ENCODE measurements at regions of chr2 and their contacts with region 1.

Region 1: DNA sequence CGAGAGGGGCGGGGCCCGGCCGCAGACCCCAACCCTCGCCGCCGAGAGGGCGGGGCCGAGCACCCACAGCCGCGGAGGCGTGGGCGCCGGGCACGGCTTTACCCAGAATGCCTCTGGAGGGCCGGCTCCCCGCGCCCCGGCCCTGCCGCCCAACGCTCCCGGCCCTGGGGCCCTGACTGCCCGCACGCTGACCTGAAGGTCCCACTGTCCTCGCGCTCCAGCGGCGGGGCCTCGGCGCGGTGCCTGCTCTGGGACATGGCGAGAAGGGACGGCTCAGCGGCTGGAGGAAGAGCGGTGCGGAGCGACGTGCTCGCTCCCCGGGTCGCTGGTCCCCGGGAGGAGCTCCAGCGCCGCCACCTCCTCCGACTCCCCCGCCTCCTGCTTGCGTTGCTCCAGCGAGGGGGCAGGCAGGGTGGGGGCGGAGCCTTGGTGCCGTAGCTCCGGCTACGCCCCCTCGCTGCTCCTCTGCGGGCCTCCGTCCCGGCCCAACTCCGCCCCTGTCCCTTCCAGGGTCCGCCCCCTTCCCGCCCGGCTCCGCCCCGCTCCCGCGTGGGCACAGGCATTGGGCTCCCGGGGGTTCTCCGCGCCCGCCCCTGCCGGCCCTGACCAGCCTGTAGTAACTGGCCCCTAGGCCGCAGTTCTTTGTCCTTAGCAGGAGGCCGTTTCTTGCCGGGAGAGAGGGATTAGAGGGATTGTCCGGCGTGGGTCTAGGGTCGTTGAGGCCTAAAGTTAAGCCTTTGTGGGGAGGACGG is at the starts of genes PJVK and PRKRA:
- DNase-seq: peak; percentile 97
- ATAC-seq: peak; percentile 91
- H3K4me3 Mint-ChIP-seq: peak within 1 kb of the TSS; percentile 87
- H3K27ac Mint-ChIP-seq: peak within 1 kb of the TSS; percentile 86
- H3K4me1 Mint-ChIP-seq: peaks cover 28% of the 10 kb centered on the region
- H3K27me3 Mint-ChIP-seq: no peaks in the 10 kb centered on the region
- CTCF ChIP-seq: no peak
- total RNA-seq, gene PJVK: 2.0 and 3.1 TPM in 2 replicates
- total RNA-seq, gene PRKRA: 49.6 and 61.3 TPM in 2 replicates

Region 2: GRCh38 chr2:178426388-178426787 is 24.6 kb before region 1 on chr2:
- CTCF ChIA-PET with region 1: no interaction called
- POLR2A ChIA-PET with region 1: interaction called, 10 read pairs
- intact Hi-C with region 1: no loop called
- DNase-seq: no peak
- ATAC-seq: no peak
- H3K4me3 Mint-ChIP-seq: no peak overlapping the region
- H3K27ac Mint-ChIP-seq: no peak overlapping the region
- H3K4me1 Mint-ChIP-seq: no peaks in the 10 kb centered on the region
- H3K27me3 Mint-ChIP-seq: no peaks in the 10 kb centered on the region
- CTCF ChIP-seq: no peak

Region 3: DNA sequence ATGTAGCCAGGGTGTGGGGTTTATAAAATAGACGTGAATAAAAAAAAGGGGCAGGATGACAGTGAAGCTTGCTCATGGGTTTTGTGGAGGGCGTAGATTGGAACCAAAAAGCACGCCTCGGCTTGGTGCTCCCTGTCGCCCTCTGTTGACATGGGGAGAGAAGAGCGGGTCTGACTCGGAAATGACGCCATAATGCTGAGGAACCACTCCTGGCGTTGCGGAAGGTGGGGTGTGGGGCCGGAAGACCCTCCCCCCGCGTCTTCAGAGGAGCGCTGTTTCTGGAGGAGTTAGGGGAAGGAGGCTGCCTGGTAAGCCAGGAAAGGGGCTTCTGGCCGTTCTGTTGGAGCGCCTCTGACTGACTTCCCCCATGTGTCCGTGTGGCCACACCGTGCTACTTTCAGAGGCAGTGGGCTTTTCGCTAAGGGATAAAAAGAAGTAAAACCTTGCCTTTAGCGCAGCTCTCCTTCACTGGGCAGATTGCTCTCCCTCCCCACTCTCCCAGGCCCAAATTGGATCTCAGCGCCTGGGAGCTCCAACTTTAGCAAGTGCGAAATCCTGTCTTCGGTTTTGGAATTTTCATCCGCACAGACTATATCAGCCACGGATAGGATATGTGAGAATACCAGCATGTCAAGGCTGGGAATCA is 72.1 kb after region 1 on chr2:
- CTCF ChIA-PET with region 1: no interaction called
- POLR2A ChIA-PET with region 1: interaction called, 5 read pairs
- intact Hi-C with region 1: loop called (anchors 1 kb)
- DNase-seq: peak; percentile 63
- ATAC-seq: peak; percentile 99
- H3K4me3 Mint-ChIP-seq: peak overlapping the region; percentile 93
- H3K27ac Mint-ChIP-seq: peak overlapping the region; percentile 84
- H3K4me1 Mint-ChIP-seq: peaks cover 34% of the 10 kb centered on the region
- H3K27me3 Mint-ChIP-seq: no peaks in the 10 kb centered on the region
- CTCF ChIP-seq: no peak

Region 4: GRCh38 chr2:178602901-178603300 is 152.0 kb after region 1 on chr2:
- CTCF ChIA-PET with region 1: no interaction called
- POLR2A ChIA-PET with region 1: no interaction called
- intact Hi-C with region 1: no loop called
- DNase-seq: no peak
- ATAC-seq: no peak
- H3K4me3 Mint-ChIP-seq: no peak overlapping the region
- H3K27ac Mint-ChIP-seq: no peak overlapping the region
- H3K4me1 Mint-ChIP-seq: no peaks in the 10 kb centered on the region
- H3K27me3 Mint-ChIP-seq: no peaks in the 10 kb centered on the region
- CTCF ChIP-seq: no peak

Region 5: DNA sequence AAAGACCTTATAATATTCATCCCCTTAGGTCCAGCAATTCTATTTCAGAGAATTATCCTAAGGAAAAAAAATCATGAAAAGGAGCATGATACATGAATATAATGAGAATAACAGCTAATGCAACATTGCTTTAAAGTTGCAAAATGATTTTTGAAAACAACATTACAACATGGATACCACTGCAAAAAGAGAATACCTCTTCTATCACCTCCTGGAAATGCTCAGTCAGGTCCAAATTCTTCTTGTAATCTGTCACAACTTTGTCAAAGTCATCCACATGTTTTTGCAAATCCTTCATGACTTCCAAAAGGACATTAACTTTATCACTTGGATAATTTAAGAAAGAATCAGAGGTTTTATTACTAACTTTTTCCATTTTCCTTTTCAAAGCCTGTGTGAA is 404.2 kb after region 1 on chr2:
- CTCF ChIA-PET with region 1: no interaction called
- POLR2A ChIA-PET with region 1: no interaction called
- intact Hi-C with region 1: no loop called
- DNase-seq: no peak
- ATAC-seq: no peak
- H3K4me3 Mint-ChIP-seq: no peak overlapping the region
- H3K27ac Mint-ChIP-seq: no peak overlapping the region
- H3K4me1 Mint-ChIP-seq: no peaks in the 10 kb centered on the region
- H3K27me3 Mint-ChIP-seq: no peaks in the 10 kb centered on the region
- CTCF ChIP-seq: no peak

Region 6: DNA sequence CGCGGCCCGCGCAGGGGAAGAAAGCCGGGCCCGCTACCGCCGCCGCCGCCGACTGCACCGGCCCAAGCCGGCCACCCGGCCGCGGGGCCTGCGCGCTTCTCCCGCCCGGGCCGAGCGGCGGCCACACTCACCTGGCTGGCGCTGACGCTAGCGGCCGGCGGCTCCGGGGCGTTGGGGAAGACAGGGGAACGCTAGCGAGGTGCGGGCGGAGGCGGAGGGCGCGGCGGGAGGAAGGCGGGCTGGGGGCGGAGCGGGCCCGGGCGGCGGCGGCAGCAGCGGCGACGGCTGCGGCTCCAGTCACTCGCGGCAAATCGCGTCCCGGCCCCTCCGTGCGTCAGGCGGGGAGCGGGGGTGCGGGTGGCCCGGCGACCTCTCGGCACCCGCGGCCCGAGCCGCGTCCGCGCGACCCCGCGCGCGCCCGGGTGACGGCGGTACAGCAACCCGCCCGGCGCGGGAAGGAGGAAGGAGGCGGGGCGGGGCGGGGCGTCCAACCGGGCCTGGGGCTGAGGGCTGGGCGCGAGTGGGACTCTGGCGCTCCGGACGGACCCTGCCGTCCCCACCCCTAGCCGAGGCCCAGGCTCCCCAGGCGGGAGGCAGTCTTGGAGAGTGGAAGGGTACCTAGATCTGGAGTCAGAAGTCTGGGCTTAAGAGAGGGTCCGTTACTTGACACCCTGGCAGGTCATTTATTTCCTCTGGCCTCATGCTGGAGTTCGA is 813.6 kb after region 1 on chr2 and contains the start of gene SESTD1:
- CTCF ChIA-PET with region 1: no interaction called
- POLR2A ChIA-PET with region 1: no interaction called
- intact Hi-C with region 1: loop called (anchors 10 kb)
- DNase-seq: peak; percentile 75
- ATAC-seq: peak; percentile 80
- H3K4me3 Mint-ChIP-seq: peak within 1 kb of the TSS; percentile 91
- H3K27ac Mint-ChIP-seq: peak within 1 kb of the TSS; percentile 86
- H3K4me1 Mint-ChIP-seq: peaks cover 53% of the 10 kb centered on the region
- H3K27me3 Mint-ChIP-seq: no peaks in the 10 kb centered on the region
- CTCF ChIP-seq: no peak
- total RNA-seq, gene SESTD1: 49.2 and 49.6 TPM in 2 replicates